Dorsolateral prefrontal cortex (tissue), 120 donors: ENCODE measurements at regions of chr21 and their contacts with region 1.

Region 1: DNA sequence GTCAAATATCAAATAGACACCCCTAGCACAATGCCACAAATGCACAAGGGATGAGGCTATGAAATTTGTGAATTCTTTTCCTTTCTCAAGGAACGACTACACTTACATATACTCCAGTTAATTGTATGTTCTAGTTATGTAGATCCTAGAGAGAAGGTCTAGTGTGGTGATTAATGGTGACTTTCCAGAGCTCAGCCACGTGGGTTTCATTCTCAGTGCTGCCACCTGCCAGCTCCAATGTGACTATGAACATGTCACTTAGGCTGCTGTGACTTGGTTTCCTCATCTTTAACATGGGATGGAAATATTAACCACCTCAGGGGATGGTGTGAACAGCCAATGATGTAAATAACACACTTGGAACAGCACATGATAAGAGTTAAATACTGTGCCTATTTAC is 138.3 kb downstream of the APP start:
- DNase-seq: no peak
- H3K4me3 ChIP-seq: no peak overlapping the region
- H3K27ac ChIP-seq: peak overlapping the region in 19 of 59 donors; percentile 3 to 78 (median 40)
- H3K27me3 ChIP-seq: no peaks in the 10 kb centered on the region
- CTCF ChIP-seq: peak in 11 of 56 donors; percentile 6 to 25 (median 12)

Region 2: GRCh38 chr21:25501996-25502665 is 530.1 kb before region 1 on chr21:
- intact Hi-C with region 1: no loop called
- DNase-seq: no peak
- H3K4me3 ChIP-seq: no peak overlapping the region
- H3K27ac ChIP-seq: no peak overlapping the region
- H3K27me3 ChIP-seq: no peaks in the 10 kb centered on the region
- CTCF ChIP-seq: no peak

Region 3: GRCh38 chr21:26226724-26227509 is 194.7 kb after region 1 on chr21:
- intact Hi-C with region 1: no loop called
- DNase-seq: no peak
- H3K4me3 ChIP-seq: no peak overlapping the region
- H3K27ac ChIP-seq: no peak overlapping the region
- H3K27me3 ChIP-seq: no peaks in the 10 kb centered on the region
- CTCF ChIP-seq: no peak

Region 4: GRCh38 chr21:26790296-26790695 is 758.0 kb after region 1 on chr21:
- intact Hi-C with region 1: loop called in 1 of 2 experiments (anchors 5 kb)
- DNase-seq: no peak
- H3K4me3 ChIP-seq: no peak overlapping the region
- H3K27ac ChIP-seq: peak overlapping the region in 24 of 59 donors; percentile 0 to 75 (median 14)
- H3K27me3 ChIP-seq: no peaks in the 10 kb centered on the region
- CTCF ChIP-seq: no peak